Caki2 (cell line): ENCODE measurements at regions of chr3 and their contacts with region 1.

Region 1: DNA sequence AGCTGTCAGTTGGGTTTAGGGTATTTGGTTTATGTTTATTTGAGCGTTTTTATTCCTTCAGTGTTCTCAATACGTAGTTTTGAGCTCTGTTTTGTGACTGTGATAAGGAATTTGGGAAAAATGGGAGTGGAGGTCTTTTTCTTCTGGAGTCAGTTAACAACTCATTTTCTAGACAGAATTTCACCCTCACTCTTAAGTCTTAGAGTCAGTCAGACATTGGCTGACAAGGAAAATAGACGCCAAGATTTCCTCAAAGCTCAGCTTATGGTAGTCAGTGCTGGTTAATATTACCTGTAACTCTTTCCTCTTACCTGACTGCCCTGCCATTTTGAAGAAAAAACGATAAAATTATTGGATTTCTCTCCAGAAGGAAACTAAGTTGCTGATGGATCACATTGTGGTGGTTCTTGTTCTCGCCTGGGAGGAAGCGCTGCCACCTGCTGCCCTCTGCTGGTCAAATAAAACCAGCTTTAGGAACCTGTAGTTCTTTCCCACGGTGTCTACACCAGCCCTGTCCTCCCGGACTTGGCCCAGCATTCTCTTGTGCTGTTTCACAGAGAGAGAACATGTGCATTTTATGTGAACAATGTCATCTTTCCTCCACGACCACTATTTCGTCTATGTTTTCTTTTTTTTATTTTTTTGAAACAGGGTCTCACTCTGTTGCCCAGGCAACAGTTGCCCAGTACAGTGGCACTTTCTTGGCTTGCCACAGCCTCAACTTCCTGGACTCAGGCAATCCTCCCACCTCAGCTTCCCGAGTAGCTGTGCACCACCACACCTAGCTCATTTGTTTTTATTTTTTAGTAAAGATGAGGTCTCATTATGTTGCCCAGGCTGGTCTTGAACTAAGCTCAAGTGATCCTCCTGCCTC is 41.4 kb upstream of the UMPS start:
- DNase-seq: peak; percentile 60

Region 2: DNA sequence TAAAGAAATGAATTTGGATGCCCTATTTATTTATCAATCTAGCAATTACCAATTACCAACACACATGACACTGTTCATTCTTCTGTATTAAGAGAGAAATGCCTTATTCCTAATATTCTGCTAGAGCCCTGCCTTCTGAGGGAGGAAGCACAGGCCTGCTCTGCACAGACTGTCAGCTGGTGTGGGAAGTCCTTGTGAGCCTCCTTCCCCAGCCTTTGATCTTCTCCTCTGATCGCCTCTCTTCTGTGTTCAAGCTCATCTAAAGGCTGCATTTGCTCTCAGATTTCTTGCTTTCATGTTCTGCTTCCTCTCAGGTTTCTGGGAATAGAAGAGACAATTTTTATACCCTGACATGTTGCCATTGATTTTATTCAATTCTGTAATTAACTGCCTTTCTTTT is 249.2 kb before region 1 on chr3:
- in situ Hi-C with region 1: no loop called
- DNase-seq: no peak

Region 3: DNA sequence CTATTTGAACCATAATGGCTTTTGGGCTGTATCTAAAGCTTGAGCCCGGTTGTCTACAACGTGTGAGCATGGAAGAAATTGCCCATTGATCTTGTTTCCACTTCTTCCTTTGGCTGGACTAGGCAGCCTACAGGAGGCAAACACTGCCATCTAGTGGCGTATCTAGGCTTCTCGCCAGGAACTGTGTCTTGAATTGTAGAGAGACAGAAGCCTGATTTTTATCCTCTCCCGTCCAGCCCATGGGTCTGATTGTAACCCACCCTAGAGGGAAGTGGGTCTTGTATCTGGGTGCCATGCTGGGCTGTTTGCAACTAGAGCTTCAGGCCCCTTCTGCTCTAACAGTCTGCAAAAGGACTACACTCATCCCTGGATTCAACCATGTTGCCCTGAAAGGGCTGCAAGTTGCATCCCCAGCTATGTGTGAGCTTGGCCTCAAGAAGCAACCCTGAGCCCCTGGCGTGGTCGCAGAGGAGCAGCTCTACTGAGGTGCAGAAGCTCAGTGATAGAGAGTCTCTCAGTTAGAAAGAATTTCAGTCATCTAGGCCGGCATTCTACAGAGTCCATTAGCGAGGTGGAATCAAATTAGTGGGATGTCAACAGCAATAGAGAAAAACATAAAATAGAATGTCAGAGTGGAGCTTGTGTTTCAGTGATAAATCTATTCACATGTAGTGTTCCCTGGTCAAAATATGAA is 128.8 kb before region 1 on chr3:
- in situ Hi-C with region 1: loop called (anchors 25 kb)
- DNase-seq: peak; percentile 71